ENCODE measurements at regions of chr2 and their contacts with region 1.

Region 1: GRCh38 chr2:179751163-179751809 is 110.1 kb downstream of the ZNF385B start:
- DNase-seq: no peak
- ATAC-seq: no peak
- H3K4me3 Mint-ChIP-seq: no peak overlapping the region
- H3K27ac Mint-ChIP-seq: no peak overlapping the region
- H3K4me1 Mint-ChIP-seq: no peaks in the 10 kb centered on the region
- H3K27me3 Mint-ChIP-seq: no peaks in the 10 kb centered on the region
- CTCF ChIP-seq: no peak

Region 2: DNA sequence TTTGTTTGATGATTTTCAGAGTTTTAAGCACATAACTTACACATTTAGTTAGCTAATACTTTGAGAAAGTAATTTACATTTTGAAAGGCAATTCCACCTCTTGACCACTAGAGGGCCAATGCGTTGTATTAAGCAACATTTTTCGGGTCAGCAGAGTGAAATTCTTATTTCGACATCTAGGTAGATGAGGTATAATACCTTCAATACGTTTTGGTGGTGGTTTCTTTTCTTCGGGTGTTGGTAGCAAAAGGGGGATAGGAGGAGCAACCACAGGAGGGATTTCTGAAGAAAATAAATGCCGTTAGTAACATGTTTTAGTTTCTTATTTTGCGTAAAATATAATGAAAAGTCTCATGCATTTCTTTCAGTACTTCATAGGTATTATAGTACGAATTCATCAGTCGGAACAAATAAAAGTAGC is 1050.4 kb before region 1 on chr2:
- CTCF ChIA-PET with region 1: no interaction called
- POLR2A ChIA-PET with region 1: no interaction called
- intact Hi-C with region 1: loop called (anchors 2 kb)
- DNase-seq: no peak
- ATAC-seq: no peak
- H3K4me3 Mint-ChIP-seq: no peak overlapping the region
- H3K27ac Mint-ChIP-seq: no peak overlapping the region
- H3K4me1 Mint-ChIP-seq: no peaks in the 10 kb centered on the region
- H3K27me3 Mint-ChIP-seq: no peaks in the 10 kb centered on the region
- CTCF ChIP-seq: peak; percentile 93

Region 3: GRCh38 chr2:178796079-178796677 is 955.1 kb before region 1 on chr2:
- CTCF ChIA-PET with region 1: no interaction called
- POLR2A ChIA-PET with region 1: no interaction called
- intact Hi-C with region 1: loop called (anchors 1 kb)
- DNase-seq: no peak
- ATAC-seq: no peak
- H3K4me3 Mint-ChIP-seq: no peak overlapping the region
- H3K27ac Mint-ChIP-seq: no peak overlapping the region
- H3K4me1 Mint-ChIP-seq: no peaks in the 10 kb centered on the region
- H3K27me3 Mint-ChIP-seq: no peaks in the 10 kb centered on the region
- CTCF ChIP-seq: no peak

Region 4: DNA sequence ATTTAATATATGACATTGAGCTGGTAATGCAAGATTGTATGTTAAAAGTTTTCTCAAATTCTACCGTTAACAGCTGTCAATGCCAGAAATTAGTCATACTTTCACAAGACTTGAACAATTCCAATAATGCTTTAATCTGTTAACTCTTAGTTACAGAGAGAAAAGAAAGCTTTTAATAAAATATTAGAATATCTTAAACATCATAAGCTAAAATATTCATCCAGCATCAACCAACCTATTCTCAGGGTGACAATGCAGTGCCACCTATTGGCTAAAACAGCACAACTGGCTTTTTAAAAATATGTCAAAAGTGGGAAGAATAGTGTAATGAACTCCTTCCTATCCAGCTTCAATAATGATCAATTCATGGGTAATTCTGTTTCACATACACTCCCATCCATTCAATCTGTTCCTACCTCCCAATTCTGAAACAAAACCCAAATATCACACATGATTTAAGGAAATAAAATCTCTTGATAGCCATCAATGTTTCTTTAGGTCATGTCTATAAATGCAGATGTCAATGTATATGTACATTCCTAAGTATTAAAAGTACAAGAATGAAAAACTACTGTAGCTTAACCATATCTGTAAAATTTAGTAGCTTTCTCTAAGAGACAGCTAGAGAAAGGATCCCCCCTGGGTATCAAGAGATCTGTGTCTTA is 621.6 kb before region 1 on chr2:
- CTCF ChIA-PET with region 1: no interaction called
- POLR2A ChIA-PET with region 1: no interaction called
- intact Hi-C with region 1: loop called (anchors 5 kb)
- DNase-seq: no peak
- ATAC-seq: no peak
- H3K4me3 Mint-ChIP-seq: no peak overlapping the region
- H3K27ac Mint-ChIP-seq: no peak overlapping the region
- H3K4me1 Mint-ChIP-seq: peaks cover 2% of the 10 kb centered on the region
- H3K27me3 Mint-ChIP-seq: no peaks in the 10 kb centered on the region
- CTCF ChIP-seq: no peak

Region 5: GRCh38 chr2:179410552-179411356 is 340.5 kb before region 1 on chr2:
- CTCF ChIA-PET with region 1: no interaction called
- POLR2A ChIA-PET with region 1: no interaction called
- intact Hi-C with region 1: loop called (anchors 1 kb)
- DNase-seq: no peak
- ATAC-seq: peak; percentile 57
- H3K4me3 Mint-ChIP-seq: peak overlapping the region; percentile 38
- H3K27ac Mint-ChIP-seq: no peak overlapping the region
- H3K4me1 Mint-ChIP-seq: peaks cover 10% of the 10 kb centered on the region
- H3K27me3 Mint-ChIP-seq: peaks cover 28% of the 10 kb centered on the region
- CTCF ChIP-seq: peak; percentile 62

Region 6: GRCh38 chr2:179936654-179937053 is 185.4 kb after region 1 on chr2:
- CTCF ChIA-PET with region 1: no interaction called
- POLR2A ChIA-PET with region 1: no interaction called
- intact Hi-C with region 1: no loop called
- DNase-seq: no peak
- ATAC-seq: no peak
- H3K4me3 Mint-ChIP-seq: no peak overlapping the region
- H3K27ac Mint-ChIP-seq: no peak overlapping the region
- H3K4me1 Mint-ChIP-seq: no peaks in the 10 kb centered on the region
- H3K27me3 Mint-ChIP-seq: no peaks in the 10 kb centered on the region
- CTCF ChIP-seq: no peak

Region 7: GRCh38 chr2:180970016-180970415 is 1218.7 kb after region 1 on chr2:
- CTCF ChIA-PET with region 1: no interaction called
- POLR2A ChIA-PET with region 1: no interaction called
- intact Hi-C with region 1: no loop called
- DNase-seq: no peak
- ATAC-seq: no peak
- H3K4me3 Mint-ChIP-seq: no peak overlapping the region
- H3K27ac Mint-ChIP-seq: no peak overlapping the region
- H3K4me1 Mint-ChIP-seq: no peaks in the 10 kb centered on the region
- H3K27me3 Mint-ChIP-seq: no peaks in the 10 kb centered on the region
- CTCF ChIP-seq: no peak